Posterior cingulate gyrus (tissue), 11 donors: ENCODE measurements at regions of chr18 and their contacts with region 1.

Region 1: DNA sequence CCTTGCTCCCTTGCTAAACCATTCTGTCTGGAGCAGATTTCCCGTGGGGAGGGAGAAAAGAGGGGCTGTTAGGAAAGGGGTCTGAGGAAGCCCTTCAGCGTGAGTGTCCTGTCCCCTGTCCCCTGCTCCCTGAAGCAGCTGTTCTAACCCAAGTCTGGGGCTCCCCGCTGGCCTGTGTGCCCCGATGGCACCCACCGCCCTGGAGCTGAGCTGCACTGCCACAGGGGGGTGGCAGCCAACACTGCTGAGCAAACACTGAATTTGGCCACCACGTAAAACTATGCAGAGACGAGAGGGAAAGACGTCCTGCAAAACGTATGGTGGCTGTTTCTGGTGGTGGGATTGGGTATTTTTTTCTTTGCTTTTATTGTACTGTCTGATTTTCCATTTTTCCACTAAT is 17.9 kb downstream of the KCNG2 start:
- DNase-seq: peak in 1 of 10 donors; percentile 80

Region 2: DNA sequence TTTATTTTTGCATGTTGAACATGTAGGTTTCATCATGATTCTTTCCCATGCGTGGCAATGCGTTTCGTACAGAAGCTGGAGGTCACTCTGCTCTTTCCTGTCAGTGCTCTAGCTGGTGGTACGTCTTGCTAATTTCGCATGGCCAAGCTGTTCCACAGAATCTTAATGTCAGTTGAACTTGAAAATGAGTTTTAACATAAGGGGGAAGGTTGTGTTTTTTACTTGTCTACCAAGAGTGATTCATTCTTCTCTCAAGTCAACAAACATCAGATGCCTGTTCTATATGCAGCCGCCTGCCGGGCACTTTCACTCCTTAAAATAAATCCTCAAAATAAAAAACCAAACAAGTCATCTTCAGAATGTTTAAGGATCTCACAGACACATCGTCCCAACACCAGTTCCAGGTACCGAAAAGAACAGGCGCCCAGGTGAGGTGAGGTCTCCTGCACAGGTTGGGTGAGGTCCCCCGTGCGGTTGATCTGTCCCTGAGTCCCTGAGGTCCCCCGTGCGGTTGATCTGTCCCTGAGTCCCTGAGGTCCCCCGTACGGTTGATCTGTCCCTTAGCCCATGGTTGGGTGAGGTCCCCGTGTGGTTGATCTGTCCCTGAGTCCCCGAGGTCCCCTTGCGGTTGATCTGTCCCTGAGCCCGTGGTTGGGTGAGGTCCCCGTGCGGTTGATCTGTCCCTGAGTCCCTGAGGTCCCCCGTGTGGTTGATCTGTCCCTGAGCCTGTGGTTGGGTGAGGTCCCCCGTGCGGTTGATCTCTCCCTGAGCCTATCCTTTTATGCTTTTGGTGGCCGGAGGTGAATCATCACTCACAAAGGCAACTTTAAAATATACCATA is 74.9 kb before region 1 on chr18:
- intact Hi-C with region 1: no loop called
- DNase-seq: peak in 1 of 10 donors; percentile 68

Region 3: GRCh38 chr18:79887181-79888000 is 71.7 kb after region 1 on chr18:
- intact Hi-C with region 1: loop called (anchors 2 kb)
- DNase-seq: peak in 3 of 10 donors; percentile 7 to 77 (median 51)